ENCODE measurements at regions of chr1 and their contacts with region 1.

Region 1: GRCh38 chr1:92994105-92994712 is 32.9 kb upstream of the DIPK1A start:
- DNase-seq: peak in 33 of 35 experiments; percentile 16 to 91 (median 66)
- ATAC-seq: peak; percentile 76 to 87 (median 81)
- H3K4me3 ChIP-seq: no peak overlapping the region
- H3K4me3 Mint-ChIP-seq: no peak overlapping the region
- H3K27ac ChIP-seq: no peak overlapping the region
- H3K27ac Mint-ChIP-seq: peak overlapping the region; percentile 36 to 53
- H3K4me1 ChIP-seq: peaks cover 34 to 36% of the 10 kb centered on the region in 2 experiments
- H3K4me1 Mint-ChIP-seq: peaks cover 45 to 46% (median 45%) of the 10 kb centered on the region in 3 donors
- H3K27me3 ChIP-seq: no peaks in the 10 kb centered on the region
- H3K27me3 Mint-ChIP-seq: no peaks in the 10 kb centered on the region

Region 2: GRCh38 chr1:92808353-92808752 is 185.9 kb before region 1 on chr1:
- CTCF ChIA-PET with region 1: no interaction called
- POLR2A ChIA-PET with region 1: no interaction called
- DNase-seq: no peak
- ATAC-seq: no peak
- H3K4me3 ChIP-seq: no peak overlapping the region
- H3K4me3 Mint-ChIP-seq: no peak overlapping the region
- H3K27ac ChIP-seq: no peak overlapping the region
- H3K27ac Mint-ChIP-seq: no peak overlapping the region
- H3K4me1 ChIP-seq: no peaks in the 10 kb centered on the region
- H3K4me1 Mint-ChIP-seq: peaks cover 0 to 5% (median 2%) of the 10 kb centered on the region in 3 donors
- H3K27me3 ChIP-seq: peaks cover 0 to 3% of the 10 kb centered on the region in 2 experiments
- H3K27me3 Mint-ChIP-seq: peaks cover 4 to 6% of the 10 kb centered on the region in 2 donors

Region 3: DNA sequence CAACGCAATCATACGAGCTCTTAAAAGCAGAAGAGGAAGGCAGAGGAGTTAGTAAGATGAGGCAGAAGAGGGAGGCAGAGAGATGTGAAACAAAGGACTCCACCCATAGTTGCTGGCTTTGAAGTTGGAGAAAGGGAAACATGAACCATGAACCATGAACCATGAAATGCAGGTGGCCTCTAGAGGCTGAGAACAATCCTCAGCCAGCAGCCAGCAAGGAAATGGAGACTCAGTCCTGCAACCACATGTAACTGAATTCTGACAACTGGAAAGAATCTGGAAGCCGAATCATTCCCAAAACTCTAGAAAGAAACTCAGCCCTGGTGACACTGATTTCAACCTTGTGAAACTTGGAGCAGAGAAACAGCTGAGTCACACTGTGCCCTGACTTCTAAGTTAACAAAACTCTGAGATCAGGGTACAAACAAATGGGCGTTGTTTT is 43.0 kb before region 1 on chr1:
- CTCF ChIA-PET with region 1: interaction called, 7 to 24 read pairs
- POLR2A ChIA-PET with region 1: interaction called in 1 of 2 experiments, 3 read pairs
- DNase-seq: peak in 16 of 35 experiments; percentile 4 to 62 (median 17)
- ATAC-seq: peak; percentile 82 to 95 (median 90)
- H3K4me3 ChIP-seq: no peak overlapping the region
- H3K4me3 Mint-ChIP-seq: no peak overlapping the region
- H3K27ac ChIP-seq: peak overlapping the region; percentile 7
- H3K27ac Mint-ChIP-seq: no peak overlapping the region
- H3K4me1 ChIP-seq: peaks cover 28 to 36% of the 10 kb centered on the region in 2 experiments
- H3K4me1 Mint-ChIP-seq: peaks cover 33 to 54% (median 52%) of the 10 kb centered on the region in 3 donors
- H3K27me3 ChIP-seq: no peaks in the 10 kb centered on the region
- H3K27me3 Mint-ChIP-seq: no peaks in the 10 kb centered on the region

Region 4: DNA sequence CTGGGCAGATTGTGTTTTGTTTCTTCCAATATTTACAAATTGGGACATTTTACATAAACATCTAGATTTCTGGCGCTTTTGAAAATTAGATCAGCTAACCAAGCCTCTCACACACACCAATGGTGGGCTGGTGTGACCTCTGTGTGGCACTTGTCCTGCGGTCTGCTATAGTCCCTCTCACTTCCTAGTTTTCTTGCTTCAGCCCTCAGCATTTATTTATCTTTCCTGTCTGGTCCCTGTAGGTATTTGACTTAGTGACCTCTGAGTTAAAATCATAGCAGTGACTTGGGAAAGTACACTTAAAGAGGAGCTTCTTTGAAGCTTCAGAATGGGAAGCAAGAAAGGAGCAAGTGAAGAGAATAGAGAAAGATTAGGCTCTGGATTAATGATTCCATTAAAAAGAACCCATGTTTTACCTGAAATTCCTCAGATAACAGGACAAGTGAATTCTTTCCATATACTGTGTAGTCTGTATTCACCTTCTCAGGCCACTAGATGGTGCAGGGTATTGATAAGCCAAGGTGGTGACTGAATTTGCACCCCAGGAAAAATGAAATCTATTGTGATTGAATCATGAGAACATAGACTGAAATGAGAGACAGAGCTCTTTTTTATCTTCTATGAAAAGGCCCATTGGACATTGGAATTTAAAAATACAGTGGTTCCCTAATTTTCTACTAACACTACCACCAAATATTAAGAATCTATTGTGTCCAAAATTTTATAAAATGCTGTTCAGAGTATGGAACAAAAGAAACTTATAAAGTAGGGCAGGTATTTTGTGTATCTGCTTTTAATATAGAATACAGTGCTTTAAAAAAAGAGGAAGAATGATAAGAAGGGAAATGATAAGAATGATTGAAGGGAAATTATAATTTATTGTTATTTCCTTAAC is 25.8 kb before region 1 on chr1:
- CTCF ChIA-PET with region 1: interaction called, 62 to 82 read pairs
- POLR2A ChIA-PET with region 1: no interaction called
- DNase-seq: peak in 6 of 35 experiments; percentile 11 to 71 (median 28)
- ATAC-seq: peak in 3 of 4 experiments; percentile 35 to 43 (median 43)
- H3K4me3 ChIP-seq: no peak overlapping the region
- H3K4me3 Mint-ChIP-seq: no peak overlapping the region
- H3K27ac ChIP-seq: no peak overlapping the region
- H3K27ac Mint-ChIP-seq: peak overlapping the region; percentile 29 to 66
- H3K4me1 ChIP-seq: peaks cover 38 to 48% of the 10 kb centered on the region in 2 experiments
- H3K4me1 Mint-ChIP-seq: peaks cover 25 to 36% (median 26%) of the 10 kb centered on the region in 3 donors
- H3K27me3 ChIP-seq: no peaks in the 10 kb centered on the region
- H3K27me3 Mint-ChIP-seq: no peaks in the 10 kb centered on the region

Region 5: DNA sequence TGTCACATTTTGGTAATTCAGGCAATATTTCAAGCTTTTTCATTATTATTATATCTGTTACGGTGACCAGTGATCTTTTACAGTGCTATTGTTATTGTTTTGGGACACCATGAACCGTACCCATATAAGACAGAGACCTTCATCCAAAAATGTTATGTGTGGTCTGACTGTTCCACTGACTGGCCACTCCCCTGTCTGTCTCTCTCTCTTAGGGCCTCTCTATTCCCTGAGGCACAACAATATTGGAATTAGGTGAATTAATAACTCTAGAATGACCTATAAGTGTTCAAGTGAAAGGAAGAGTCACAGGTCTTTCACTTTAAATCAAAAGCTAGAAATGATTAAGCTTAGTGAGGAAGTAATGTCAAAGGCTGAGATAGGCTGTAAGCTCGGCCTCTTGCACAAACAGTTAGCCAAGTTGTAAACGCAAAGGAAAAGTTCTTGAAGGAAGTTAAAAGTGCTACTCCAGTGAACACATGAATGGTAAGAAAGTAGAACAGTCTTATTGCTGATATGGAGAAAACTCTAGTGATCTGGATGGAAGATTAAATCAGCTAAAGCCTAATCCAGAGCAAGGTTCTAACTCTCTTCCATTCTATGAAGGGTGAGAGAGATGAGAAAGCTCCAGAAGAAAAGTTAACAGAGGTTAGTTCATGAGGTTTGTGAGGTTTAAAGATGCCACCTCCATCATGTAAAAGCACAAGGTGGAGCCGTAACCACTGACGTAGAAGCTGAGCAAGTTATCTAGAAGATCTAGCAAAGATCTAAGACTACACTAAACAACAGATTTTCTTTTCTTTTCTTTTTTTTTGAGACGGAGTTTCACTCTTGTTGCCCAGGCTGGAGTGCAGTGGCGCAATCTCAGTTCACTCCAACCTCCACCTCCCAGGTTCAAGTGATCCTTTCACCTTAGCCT is 13.2 kb before region 1 on chr1:
- CTCF ChIA-PET with region 1: interaction called, 12 to 21 read pairs
- POLR2A ChIA-PET with region 1: interaction called, 5 to 10 read pairs
- DNase-seq: peak in 33 of 35 experiments; percentile 35 to 90 (median 68)
- ATAC-seq: peak; percentile 90 to 98 (median 94)
- H3K4me3 ChIP-seq: peak overlapping the region in 1 of 2 donors; percentile 6
- H3K4me3 Mint-ChIP-seq: peak overlapping the region; percentile 25 to 63 (median 58)
- H3K27ac ChIP-seq: peak overlapping the region; percentile 94
- H3K27ac Mint-ChIP-seq: peak overlapping the region; percentile 96 to 100
- H3K4me1 ChIP-seq: peaks cover 9 to 29% of the 10 kb centered on the region in 2 experiments
- H3K4me1 Mint-ChIP-seq: peaks cover 38 to 47% (median 46%) of the 10 kb centered on the region in 3 donors
- H3K27me3 ChIP-seq: no peaks in the 10 kb centered on the region
- H3K27me3 Mint-ChIP-seq: no peaks in the 10 kb centered on the region

Region 6: DNA sequence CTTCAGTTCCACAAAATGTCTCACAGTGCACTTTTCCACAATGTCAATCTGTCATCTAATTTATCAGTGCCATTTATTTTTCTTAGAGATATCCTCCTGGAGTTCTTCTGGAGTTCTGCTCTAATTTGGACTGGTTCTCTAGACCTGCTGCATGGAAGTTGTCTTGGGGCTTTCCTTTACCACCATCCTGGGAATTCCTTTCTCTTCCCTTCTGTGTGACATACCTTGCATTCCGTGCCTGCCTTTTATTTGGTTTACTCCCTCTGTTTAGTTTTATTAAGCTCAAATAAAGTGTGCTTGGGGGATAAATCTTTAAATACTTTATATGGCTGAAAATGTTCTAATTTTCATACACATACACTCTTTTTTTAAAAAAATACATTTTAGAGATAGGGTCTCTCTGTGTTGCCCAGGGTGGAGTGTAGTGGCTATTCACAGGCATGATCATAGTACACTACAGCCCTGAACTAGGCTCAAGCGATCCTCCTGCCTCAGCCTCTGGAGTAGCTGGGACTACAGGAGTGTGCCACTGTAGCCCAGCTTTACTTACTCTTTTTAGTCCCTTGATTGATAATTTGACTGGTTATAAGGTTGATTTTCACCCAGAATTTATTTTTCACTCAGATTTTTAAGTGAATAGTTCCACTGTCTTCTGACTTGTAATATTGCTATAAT is 99.3 kb after region 1 on chr1:
- CTCF ChIA-PET with region 1: no interaction called
- POLR2A ChIA-PET with region 1: no interaction called
- DNase-seq: no peak
- ATAC-seq: no peak
- H3K4me3 ChIP-seq: no peak overlapping the region
- H3K4me3 Mint-ChIP-seq: peak overlapping the region in 1 of 3 donors; percentile 26
- H3K27ac ChIP-seq: no peak overlapping the region
- H3K27ac Mint-ChIP-seq: no peak overlapping the region
- H3K4me1 ChIP-seq: peaks cover 0 to 10% of the 10 kb centered on the region in 2 experiments
- H3K4me1 Mint-ChIP-seq: peaks cover 73 to 77% (median 76%) of the 10 kb centered on the region in 3 donors
- H3K27me3 ChIP-seq: no peaks in the 10 kb centered on the region
- H3K27me3 Mint-ChIP-seq: no peaks in the 10 kb centered on the region

Region 7: DNA sequence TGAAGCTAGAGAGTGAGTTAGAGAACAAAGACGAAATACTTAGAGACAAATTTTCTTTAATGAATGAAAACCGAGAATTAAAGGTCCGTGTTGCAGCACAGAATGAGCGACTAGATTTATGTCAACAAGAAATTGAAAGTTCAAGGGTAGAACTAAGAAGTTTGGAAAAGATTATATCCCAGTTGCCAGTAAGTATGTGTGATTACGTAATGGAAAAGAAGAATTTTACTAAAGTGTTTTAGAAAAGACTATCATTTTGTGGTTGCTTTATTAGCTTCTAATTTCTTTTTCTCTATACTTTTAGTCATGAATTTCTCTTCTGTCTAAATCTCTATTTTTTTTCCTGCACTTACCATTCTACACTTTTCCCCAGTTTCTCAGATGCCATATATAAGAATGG is 213.0 kb after region 1 on chr1:
- CTCF ChIA-PET with region 1: no interaction called
- POLR2A ChIA-PET with region 1: no interaction called
- DNase-seq: no peak
- ATAC-seq: no peak
- H3K4me3 ChIP-seq: no peak overlapping the region
- H3K4me3 Mint-ChIP-seq: no peak overlapping the region
- H3K27ac ChIP-seq: no peak overlapping the region
- H3K27ac Mint-ChIP-seq: no peak overlapping the region
- H3K4me1 ChIP-seq: no peaks in the 10 kb centered on the region
- H3K4me1 Mint-ChIP-seq: no peaks in the 10 kb centered on the region
- H3K27me3 ChIP-seq: no peaks in the 10 kb centered on the region
- H3K27me3 Mint-ChIP-seq: no peaks in the 10 kb centered on the region

Measured in T-cell (primary cell).